Naive thymus-derived CD4-positive, alpha-beta T cell (primary cell): ENCODE measurements at regions of chr3 and their contacts with region 1.

Region 1: GRCh38 chr3:39414421-39414907 is 7.9 kb downstream of the RPSA start:
- DNase-seq: no peak
- ATAC-seq: peak; percentile 22
- H3K4me3 ChIP-seq: no peak overlapping the region
- H3K4me3 Mint-ChIP-seq: peak overlapping the region in 1 of 10 donors; percentile 17
- H3K27ac ChIP-seq: no peak overlapping the region
- H3K27ac Mint-ChIP-seq: peak overlapping the region in 8 of 9 donors; percentile 11 to 71 (median 62)
- H3K4me1 ChIP-seq: peaks cover 10 to 11% of the 10 kb centered on the region in 2 donors
- H3K4me1 Mint-ChIP-seq: peaks cover 13 to 39% (median 25%) of the 10 kb centered on the region in 7 donors
- H3K27me3 ChIP-seq: no peaks in the 10 kb centered on the region
- H3K27me3 Mint-ChIP-seq: peaks cover 0 to 6% (median 3%) of the 10 kb centered on the region in 5 donors

Region 2: GRCh38 chr3:38203690-38204089 is 1210.8 kb before region 1 on chr3:
- CTCF ChIA-PET with region 1: no interaction called
- POLR2A ChIA-PET with region 1: no interaction called
- intact Hi-C with region 1: no loop called
- DNase-seq: no peak
- ATAC-seq: no peak
- H3K4me3 ChIP-seq: no peak overlapping the region
- H3K4me3 Mint-ChIP-seq: no peak overlapping the region
- H3K27ac ChIP-seq: no peak overlapping the region
- H3K27ac Mint-ChIP-seq: no peak overlapping the region
- H3K4me1 ChIP-seq: peaks cover 0 to 4% of the 10 kb centered on the region in 2 donors
- H3K4me1 Mint-ChIP-seq: peaks cover 21 to 56% (median 44%) of the 10 kb centered on the region in 7 donors
- H3K27me3 ChIP-seq: no peaks in the 10 kb centered on the region
- H3K27me3 Mint-ChIP-seq: no peaks in the 10 kb centered on the region

Region 3: GRCh38 chr3:39497753-39498152 is 83.3 kb after region 1 on chr3:
- CTCF ChIA-PET with region 1: no interaction called
- POLR2A ChIA-PET with region 1: no interaction called
- intact Hi-C with region 1: loop called in 1 of 2 experiments (anchors 1 kb)
- DNase-seq: no peak
- ATAC-seq: no peak
- H3K4me3 ChIP-seq: no peak overlapping the region
- H3K4me3 Mint-ChIP-seq: no peak overlapping the region
- H3K27ac ChIP-seq: no peak overlapping the region
- H3K27ac Mint-ChIP-seq: no peak overlapping the region
- H3K4me1 ChIP-seq: peaks cover 0 to 4% of the 10 kb centered on the region in 2 donors
- H3K4me1 Mint-ChIP-seq: peaks cover 2 to 12% (median 5%) of the 10 kb centered on the region in 7 donors
- H3K27me3 ChIP-seq: peaks cover 0 to 2% of the 10 kb centered on the region in 2 donors
- H3K27me3 Mint-ChIP-seq: peaks cover 26 to 46% (median 36%) of the 10 kb centered on the region in 5 donors